ENCODE measurements at regions of chr1 and their contacts with region 1.

Region 1: DNA sequence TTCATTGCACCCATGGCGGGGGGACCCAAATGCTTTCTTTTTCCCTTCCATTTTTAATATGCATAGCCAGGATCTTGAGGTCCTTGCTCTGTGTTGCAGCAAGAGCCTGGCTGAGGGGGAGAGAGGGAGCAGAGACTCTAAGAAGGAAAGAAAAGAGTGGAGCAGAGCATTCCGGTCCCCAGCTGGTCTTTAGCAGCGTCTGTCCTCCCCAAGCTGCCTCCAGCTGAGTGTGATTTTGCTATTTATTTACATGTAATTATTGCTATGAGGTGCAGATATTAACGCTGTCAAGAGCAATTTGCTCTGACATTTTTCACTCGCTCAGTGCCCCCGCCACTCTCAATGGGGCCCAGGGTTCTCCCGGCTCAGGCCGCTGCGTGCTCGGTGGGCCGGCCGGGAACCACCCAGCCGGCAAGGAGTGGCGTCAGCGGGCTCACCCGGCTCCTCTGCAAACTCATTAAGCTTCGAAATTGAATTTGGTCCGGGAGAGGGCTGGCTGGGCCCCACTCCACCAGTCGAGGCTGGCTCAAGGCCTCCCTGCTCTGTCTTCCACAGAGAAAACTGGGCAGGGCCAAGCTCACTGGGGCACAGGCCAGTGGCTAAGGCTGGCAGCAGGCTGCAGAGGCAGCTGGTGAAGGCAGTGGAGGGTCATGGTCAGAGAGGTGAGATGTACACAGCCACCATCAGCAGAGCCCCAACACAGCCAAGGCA is 93.2 kb downstream of the PAX7 start:
- DNase-seq: no peak
- H3K4me3 ChIP-seq: no peak overlapping the region
- H3K27ac ChIP-seq: no peak overlapping the region
- H3K4me1 ChIP-seq: no peaks in the 10 kb centered on the region
- H3K27me3 ChIP-seq: peaks cover 0 to 89% of the 10 kb centered on the region in 2 donors
- CTCF ChIP-seq: no peak
- POLR2A ChIP-seq: no peak

Region 2: GRCh38 chr1:18681423-18681835 is 42.4 kb before region 1 on chr1:
- intact Hi-C with region 1: no loop called
- DNase-seq: no peak
- H3K4me3 ChIP-seq: no peak overlapping the region
- H3K27ac ChIP-seq: no peak overlapping the region
- H3K4me1 ChIP-seq: no peaks in the 10 kb centered on the region
- H3K27me3 ChIP-seq: peaks cover 0 to 14% of the 10 kb centered on the region in 2 donors
- CTCF ChIP-seq: peak in 2 of 3 donors; percentile 36 to 55
- POLR2A ChIP-seq: no peak

Region 3: GRCh38 chr1:18840145-18840544 is 116.3 kb after region 1 on chr1:
- intact Hi-C with region 1: loop called (anchors 5 kb)
- DNase-seq: no peak
- H3K4me3 ChIP-seq: no peak overlapping the region
- H3K27ac ChIP-seq: no peak overlapping the region
- H3K4me1 ChIP-seq: no peaks in the 10 kb centered on the region
- H3K27me3 ChIP-seq: peaks cover 0 to 18% of the 10 kb centered on the region in 2 donors
- CTCF ChIP-seq: no peak
- POLR2A ChIP-seq: no peak

Region 4: DNA sequence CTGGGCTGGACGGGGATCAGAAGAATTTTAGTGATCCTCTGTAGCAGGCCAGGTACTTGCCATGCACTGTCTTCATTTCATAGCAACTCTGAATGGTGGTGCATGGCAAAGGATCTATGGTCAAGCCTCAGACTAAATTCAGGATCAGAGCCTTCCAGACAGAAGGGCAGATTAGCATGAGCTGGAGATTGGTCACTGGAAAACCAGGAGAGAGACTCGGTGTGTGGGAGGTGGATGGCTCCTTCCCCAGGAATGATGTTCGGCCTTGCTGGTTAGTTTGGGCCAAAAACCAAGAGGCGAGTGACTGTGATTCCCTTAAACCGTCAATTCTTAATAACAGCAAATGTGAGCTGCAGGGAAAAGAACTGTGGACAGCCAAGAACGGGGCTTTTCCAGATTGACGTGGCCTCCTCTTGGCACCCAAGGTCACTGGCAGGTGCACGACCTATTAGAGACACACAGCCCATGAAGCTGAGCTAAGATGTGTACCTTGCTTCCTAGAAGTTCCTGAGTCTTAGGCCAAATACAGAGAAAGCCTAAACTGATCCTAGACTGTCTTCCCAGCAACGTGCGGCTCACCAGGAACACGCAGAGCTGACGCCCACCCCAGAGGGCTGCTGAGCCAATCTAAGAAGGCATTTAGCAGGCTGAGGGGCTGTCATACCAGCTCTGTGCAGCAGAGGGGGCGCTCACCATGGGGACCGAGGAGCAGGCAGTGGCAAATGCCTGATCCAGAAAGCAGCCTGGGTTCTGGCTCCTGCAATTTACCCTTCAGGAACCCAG is 160.0 kb after region 1 on chr1:
- intact Hi-C with region 1: no loop called
- DNase-seq: peak; percentile 64 to 76
- H3K4me3 ChIP-seq: no peak overlapping the region
- H3K27ac ChIP-seq: no peak overlapping the region
- H3K4me1 ChIP-seq: no peaks in the 10 kb centered on the region
- H3K27me3 ChIP-seq: no peaks in the 10 kb centered on the region
- CTCF ChIP-seq: peak; percentile 62 to 83 (median 82)
- POLR2A ChIP-seq: no peak

Region 5: GRCh38 chr1:19936061-19936750 is 1212.3 kb after region 1 on chr1:
- intact Hi-C with region 1: no loop called
- DNase-seq: no peak
- H3K4me3 ChIP-seq: no peak overlapping the region
- H3K27ac ChIP-seq: no peak overlapping the region
- H3K4me1 ChIP-seq: no peaks in the 10 kb centered on the region
- H3K27me3 ChIP-seq: no peaks in the 10 kb centered on the region
- CTCF ChIP-seq: no peak
- POLR2A ChIP-seq: no peak